K562 (cell line): ENCODE measurements at regions of chr11 and their contacts with region 1.

Region 1: GRCh38 chr11:123511037-123511870 is 81.2 kb downstream of the GRAMD1B start:
- DNase-seq: peak; percentile 63 to 93 (median 80)
- ATAC-seq: peak; percentile 98
- H3K4me3 ChIP-seq: no peak overlapping the region
- H3K27ac ChIP-seq: no peak overlapping the region
- H3K4me1 ChIP-seq: no peaks in the 10 kb centered on the region
- H3K27me3 ChIP-seq: peaks cover 0 to 10% of the 10 kb centered on the region in 2 experiments; a peak in 1 of 5 replicates
- CTCF ChIP-seq: peak; percentile 69 to 74 (median 72)
- EP300 ChIP-seq: no peak
- POLR2A ChIP-seq: no peak
- RAD21 ChIP-seq: peak in 1 of 2 experiments; percentile 41; a peak in 3 of 4 replicates

Region 2: GRCh38 chr11:123183391-123184099 is 327.7 kb before region 1 on chr11:
- CTCF ChIA-PET with region 1: no interaction called
- POLR2A ChIA-PET with region 1: no interaction called
- in situ Hi-C with region 1: no loop called
- intact Hi-C with region 1: no loop called
- DNase-seq: no peak
- ATAC-seq: no peak
- H3K4me3 ChIP-seq: no peak overlapping the region
- H3K27ac ChIP-seq: no peak overlapping the region
- H3K4me1 ChIP-seq: no peaks in the 10 kb centered on the region
- H3K27me3 ChIP-seq: peaks cover 14 to 70% of the 10 kb centered on the region in 2 experiments; a peak in 4 of 5 replicates
- CTCF ChIP-seq: no peak
- EP300 ChIP-seq: no peak
- POLR2A ChIP-seq: no peak
- RAD21 ChIP-seq: no peak

Region 3: DNA sequence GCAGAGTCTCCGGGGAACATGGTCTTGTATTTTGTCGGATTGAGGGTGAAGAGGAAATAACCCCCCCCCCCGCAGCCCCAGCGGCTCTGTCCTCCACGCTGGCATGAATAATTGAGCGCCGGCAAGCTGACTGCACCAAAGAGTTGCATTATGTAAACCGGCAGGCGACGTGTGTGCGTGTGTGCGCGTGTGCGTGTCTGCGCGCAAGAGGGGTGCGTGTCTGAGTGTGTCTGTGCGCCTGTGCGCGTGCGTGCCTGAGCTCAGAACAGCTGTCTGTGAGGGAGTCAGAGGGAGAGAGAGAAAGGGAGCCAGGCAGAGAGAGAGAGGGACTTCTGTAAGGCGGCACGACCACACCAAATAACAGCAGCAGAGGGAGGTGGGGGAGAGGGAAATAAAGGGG is 48.8 kb after region 1 on chr11:
- CTCF ChIA-PET with region 1: interaction called, 3 read pairs
- POLR2A ChIA-PET with region 1: interaction called, 3 read pairs
- in situ Hi-C with region 1: no loop called
- intact Hi-C with region 1: loop called (anchors 2 kb)
- DNase-seq: no peak
- ATAC-seq: no peak
- H3K4me3 ChIP-seq: no peak overlapping the region
- H3K27ac ChIP-seq: no peak overlapping the region
- H3K4me1 ChIP-seq: no peaks in the 10 kb centered on the region
- H3K27me3 ChIP-seq: peaks cover 14 to 20% of the 10 kb centered on the region in 2 experiments; a peak in 4 of 5 replicates
- CTCF ChIP-seq: no peak
- EP300 ChIP-seq: no peak
- POLR2A ChIP-seq: no peak
- RAD21 ChIP-seq: no peak

Region 4: DNA sequence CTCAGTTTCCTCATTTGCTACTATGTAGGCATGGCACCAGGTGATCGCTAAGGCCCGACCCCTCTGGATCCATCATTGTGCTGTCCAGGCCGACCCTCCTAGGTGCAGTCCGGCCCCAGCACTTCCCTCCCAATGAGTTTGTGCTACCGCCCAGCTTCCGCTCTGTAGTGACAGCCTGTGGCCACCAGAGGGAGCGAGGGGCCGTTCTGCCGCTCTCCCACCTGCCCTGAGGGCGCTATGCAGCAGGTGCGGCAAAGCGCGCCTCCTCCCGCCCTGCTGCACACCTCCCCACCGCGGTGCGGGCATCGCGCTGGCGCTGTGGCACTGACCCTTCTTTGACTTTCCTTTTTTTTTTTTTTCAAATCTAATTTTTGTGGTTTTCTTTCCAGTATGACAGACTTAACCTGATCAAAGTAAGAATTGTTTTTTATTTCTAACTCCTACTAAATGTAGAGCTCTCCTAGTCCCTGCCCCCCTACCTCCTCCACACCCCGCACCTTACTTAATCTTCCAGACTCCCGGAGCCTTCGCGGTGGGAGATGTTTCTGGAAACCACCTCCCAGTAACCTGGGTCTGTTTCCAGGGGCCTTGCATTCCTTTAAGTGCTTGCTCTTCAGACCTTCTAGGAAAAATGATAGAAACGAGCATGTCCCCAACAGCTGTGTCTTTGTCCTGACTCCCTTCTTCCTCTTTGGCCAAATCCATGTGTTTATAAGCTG is 69.5 kb after region 1 on chr11:
- CTCF ChIA-PET with region 1: interaction called, 3 read pairs
- POLR2A ChIA-PET with region 1: no interaction called
- in situ Hi-C with region 1: no loop called
- intact Hi-C with region 1: loop called (anchors 1 kb)
- DNase-seq: peak; percentile 67 to 89 (median 80)
- ATAC-seq: peak; percentile 94
- H3K4me3 ChIP-seq: no peak overlapping the region
- H3K27ac ChIP-seq: no peak overlapping the region
- H3K4me1 ChIP-seq: peaks cover 0 to 10% of the 10 kb centered on the region in 2 experiments; a peak in 1 of 5 replicates
- H3K27me3 ChIP-seq: peaks cover 0 to 31% of the 10 kb centered on the region in 2 experiments; a peak in 1 of 5 replicates
- CTCF ChIP-seq: peak; percentile 84 to 97 (median 89)
- EP300 ChIP-seq: no peak
- POLR2A ChIP-seq: no peak
- RAD21 ChIP-seq: peak; percentile 36 to 65

Region 5: DNA sequence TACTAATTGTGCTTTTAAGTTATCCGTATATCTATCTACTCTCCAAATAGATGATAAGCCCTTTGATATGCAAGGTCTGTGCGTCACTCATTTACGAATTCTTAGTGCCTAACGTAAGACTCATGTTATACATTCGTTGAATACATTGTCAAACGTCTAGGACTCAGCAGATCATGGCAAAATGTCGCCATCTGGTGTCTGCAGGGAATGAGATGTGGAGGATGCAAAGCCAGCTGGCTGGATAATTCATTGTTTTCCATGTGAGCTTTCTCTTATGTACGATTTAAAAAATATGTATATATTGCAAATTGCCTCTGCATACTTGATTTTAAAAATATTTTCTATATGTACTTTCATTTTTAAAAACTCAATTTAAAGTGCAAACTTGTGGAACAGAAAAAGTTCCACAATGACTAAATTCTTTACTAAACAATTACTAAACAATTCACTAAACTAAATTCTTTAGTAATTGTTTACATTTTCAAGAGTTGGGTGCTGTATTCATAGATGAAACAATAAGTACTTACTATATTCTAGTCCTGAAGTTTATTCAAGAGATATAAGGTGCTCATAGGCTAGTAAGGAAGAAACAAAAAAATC is 196.5 kb after region 1 on chr11:
- CTCF ChIA-PET with region 1: no interaction called
- POLR2A ChIA-PET with region 1: no interaction called
- in situ Hi-C with region 1: no loop called
- intact Hi-C with region 1: loop called (anchors 5 kb)
- DNase-seq: peak; percentile 57 to 72 (median 59)
- ATAC-seq: peak; percentile 92
- H3K4me3 ChIP-seq: no peak overlapping the region
- H3K27ac ChIP-seq: no peak overlapping the region
- H3K4me1 ChIP-seq: no peaks in the 10 kb centered on the region; a peak in 1 of 5 replicates
- H3K27me3 ChIP-seq: peaks cover 0 to 5% of the 10 kb centered on the region in 2 experiments; a peak in 1 of 5 replicates
- CTCF ChIP-seq: peak; percentile 64 to 87 (median 72)
- EP300 ChIP-seq: no peak
- POLR2A ChIP-seq: no peak
- RAD21 ChIP-seq: peak; percentile 82 to 88